MCF 10A (cell line): ENCODE measurements at regions of chr12 and their contacts with region 1.

Region 1: DNA sequence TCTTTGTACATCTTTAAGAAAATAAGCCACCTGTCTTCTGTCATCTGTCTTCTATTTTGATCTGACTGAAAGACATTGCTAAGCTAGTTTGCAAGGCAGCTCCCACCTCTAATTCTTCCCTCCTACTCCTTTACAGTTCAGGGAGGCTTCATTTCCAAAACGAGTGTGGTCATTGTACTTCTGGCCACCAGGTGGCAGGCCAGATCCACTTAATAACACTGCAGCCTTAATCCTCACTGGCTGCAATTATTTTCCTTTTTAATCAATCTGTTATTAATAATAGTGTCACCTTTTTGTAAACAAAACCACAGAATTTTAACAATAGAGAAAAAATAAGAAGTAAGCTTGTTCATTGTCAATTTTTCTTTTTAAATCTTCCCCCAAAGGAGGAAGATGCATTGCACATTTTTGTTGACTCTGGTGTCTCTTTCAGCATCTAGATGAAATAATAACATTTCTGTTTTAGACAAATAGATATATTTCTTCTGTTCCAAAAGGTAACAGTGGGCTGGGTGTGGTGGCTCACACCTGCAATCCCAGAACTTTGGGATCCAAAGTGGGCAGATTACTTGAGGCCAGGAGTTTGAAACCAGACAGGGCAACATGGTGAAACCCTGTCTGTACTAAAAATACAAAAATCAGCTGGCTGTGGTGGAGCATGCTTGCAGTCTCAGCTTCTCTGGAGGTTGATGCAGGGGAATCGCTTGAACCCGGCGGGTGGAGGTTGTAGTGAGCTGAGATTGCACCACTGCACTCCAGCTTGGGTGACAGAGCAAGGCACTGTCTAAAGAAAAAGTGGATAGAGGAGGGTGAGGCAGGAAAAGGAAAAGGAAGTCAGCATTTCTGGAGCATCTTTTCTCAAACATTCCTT is 23.3 kb downstream of the GABARAPL1 start:
- DNase-seq: peak; percentile 53
- H3K4me3 Mint-ChIP-seq: no peak overlapping the region
- H3K27ac Mint-ChIP-seq: no peak overlapping the region
- H3K4me1 Mint-ChIP-seq: peaks cover 17% of the 10 kb centered on the region
- H3K27me3 Mint-ChIP-seq: no peaks in the 10 kb centered on the region
- CTCF ChIP-seq: peak; percentile 68

Region 2: GRCh38 chr12:10167588-10167987 is 68.4 kb before region 1 on chr12:
- CTCF ChIA-PET with region 1: no interaction called
- POLR2A ChIA-PET with region 1: no interaction called
- intact Hi-C with region 1: no loop called
- DNase-seq: peak; percentile 72
- H3K4me3 Mint-ChIP-seq: no peak overlapping the region
- H3K27ac Mint-ChIP-seq: no peak overlapping the region
- H3K4me1 Mint-ChIP-seq: peaks cover 26% of the 10 kb centered on the region
- H3K27me3 Mint-ChIP-seq: no peaks in the 10 kb centered on the region
- CTCF ChIP-seq: no peak

Region 3: DNA sequence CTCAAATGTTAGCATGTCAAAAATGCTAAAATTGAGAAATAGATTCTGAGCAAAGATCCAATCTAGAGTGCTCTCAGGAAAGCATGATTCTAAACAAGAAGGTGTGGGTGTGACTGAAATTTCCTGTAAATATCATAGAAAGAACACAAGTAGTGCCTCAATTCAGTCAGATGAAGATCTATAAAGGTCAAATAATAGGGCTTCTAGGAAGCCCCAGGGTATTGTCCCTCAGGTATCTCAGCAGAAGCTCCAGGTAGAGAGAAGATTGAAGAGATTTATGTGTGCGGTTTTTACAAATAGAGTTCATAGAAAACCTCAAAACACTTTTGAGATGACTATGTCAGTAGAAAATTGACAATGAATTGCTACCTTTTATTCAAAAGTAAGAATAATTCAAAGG is 84.6 kb after region 1 on chr12:
- CTCF ChIA-PET with region 1: interaction called, 10 read pairs
- POLR2A ChIA-PET with region 1: no interaction called
- intact Hi-C with region 1: no loop called
- DNase-seq: no peak
- H3K4me3 Mint-ChIP-seq: no peak overlapping the region
- H3K27ac Mint-ChIP-seq: peak overlapping the region; percentile 43
- H3K4me1 Mint-ChIP-seq: peaks cover 4% of the 10 kb centered on the region
- H3K27me3 Mint-ChIP-seq: no peaks in the 10 kb centered on the region
- CTCF ChIP-seq: no peak

Region 4: GRCh38 chr12:10501031-10501430 is 265.0 kb after region 1 on chr12:
- CTCF ChIA-PET with region 1: interaction called, 10 read pairs
- POLR2A ChIA-PET with region 1: no interaction called
- intact Hi-C with region 1: loop called (anchors 1 kb)
- DNase-seq: peak; percentile 26
- H3K4me3 Mint-ChIP-seq: no peak overlapping the region
- H3K27ac Mint-ChIP-seq: no peak overlapping the region
- H3K4me1 Mint-ChIP-seq: peaks cover 6% of the 10 kb centered on the region
- H3K27me3 Mint-ChIP-seq: no peaks in the 10 kb centered on the region
- CTCF ChIP-seq: peak; percentile 65

Region 5: GRCh38 chr12:10567813-10568212 is 331.8 kb after region 1 on chr12:
- CTCF ChIA-PET with region 1: interaction called, 40 read pairs
- POLR2A ChIA-PET with region 1: no interaction called
- intact Hi-C with region 1: no loop called
- DNase-seq: no peak
- H3K4me3 Mint-ChIP-seq: no peak overlapping the region
- H3K27ac Mint-ChIP-seq: no peak overlapping the region
- H3K4me1 Mint-ChIP-seq: peaks cover 8% of the 10 kb centered on the region
- H3K27me3 Mint-ChIP-seq: no peaks in the 10 kb centered on the region
- CTCF ChIP-seq: no peak

Region 6: GRCh38 chr12:10749700-10750384 is 513.8 kb after region 1 on chr12:
- CTCF ChIA-PET with region 1: interaction called, 6 read pairs
- POLR2A ChIA-PET with region 1: no interaction called
- intact Hi-C with region 1: loop called (anchors 1 kb)
- DNase-seq: peak; percentile 94
- H3K4me3 Mint-ChIP-seq: peak overlapping the region; percentile 66
- H3K27ac Mint-ChIP-seq: peak overlapping the region; percentile 79
- H3K4me1 Mint-ChIP-seq: peaks cover 6% of the 10 kb centered on the region
- H3K27me3 Mint-ChIP-seq: peaks cover 22% of the 10 kb centered on the region
- CTCF ChIP-seq: peak; percentile 82